H1 (cell line): ENCODE measurements at regions of chr18 and their contacts with region 1.

Region 1: DNA sequence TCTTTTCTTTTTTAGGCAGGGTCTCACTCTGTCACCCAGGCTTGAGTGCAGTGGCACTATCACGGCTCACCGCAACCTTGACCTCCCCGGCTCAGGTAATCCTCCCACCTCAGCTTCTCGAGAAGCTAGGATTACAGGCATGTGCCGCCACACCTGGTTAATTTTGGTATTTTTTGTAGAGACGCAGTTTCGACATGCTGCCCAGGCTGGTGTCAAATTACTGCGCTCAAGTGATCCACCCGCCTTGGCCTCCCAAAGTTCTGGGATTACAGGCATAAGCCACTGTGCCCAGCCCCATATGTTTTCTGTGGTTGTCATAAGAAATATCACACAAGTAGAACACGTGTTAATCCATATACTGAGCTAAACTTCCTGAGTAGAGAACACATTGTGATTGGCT is 14.6 kb downstream of the ENOSF1 start:
- DNase-seq: no peak
- H3K4me3 ChIP-seq: no peak overlapping the region
- H3K27ac ChIP-seq: no peak overlapping the region
- H3K4me1 ChIP-seq: no peaks in the 10 kb centered on the region; a peak in 1 of 7 replicates
- H3K27me3 ChIP-seq: no peaks in the 10 kb centered on the region
- CTCF ChIP-seq: no peak
- EP300 ChIP-seq: no peak
- POLR2A ChIP-seq: no peak
- RAD21 ChIP-seq: peak in 1 of 2 experiments; percentile 26; a peak in 1 of 4 replicates

Region 2: DNA sequence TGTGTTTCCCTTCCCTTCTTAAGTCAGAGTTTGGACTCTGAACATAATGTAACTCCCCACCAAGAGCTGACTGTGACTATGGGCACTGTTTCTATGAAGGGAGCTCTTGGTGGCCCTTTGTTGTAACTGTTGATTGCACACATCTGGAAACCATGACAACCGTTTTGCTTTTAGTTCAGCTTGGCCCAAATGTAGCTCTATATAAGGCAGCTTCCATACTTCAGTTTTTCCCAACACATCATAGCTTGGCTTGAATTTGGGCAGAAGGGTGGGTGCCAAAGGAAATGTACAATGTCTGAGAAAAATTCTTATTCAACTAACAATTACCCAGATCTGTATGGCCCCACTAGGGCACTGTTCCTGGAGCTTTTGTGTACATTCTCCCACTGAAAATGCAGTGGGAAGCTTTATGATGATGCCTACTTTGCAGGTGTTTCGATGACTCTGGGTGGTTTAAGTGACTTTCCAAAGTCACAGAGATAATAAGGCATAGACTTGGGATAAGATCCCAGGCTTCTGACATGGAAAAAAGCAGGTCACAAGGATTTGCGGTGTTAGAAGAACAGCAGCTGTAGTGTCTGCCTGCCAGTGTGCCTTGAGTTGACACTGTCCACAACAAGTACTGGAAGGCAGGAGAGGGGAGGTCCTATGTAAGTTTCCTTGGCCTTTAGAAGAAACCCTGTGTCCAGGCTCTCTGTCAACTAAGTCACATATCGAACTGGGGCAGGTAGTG is 120.0 kb before region 1 on chr18:
- CTCF ChIA-PET with region 1: no interaction called
- POLR2A ChIA-PET with region 1: no interaction called
- DNase-seq: no peak
- H3K4me3 ChIP-seq: no peak overlapping the region
- H3K27ac ChIP-seq: no peak overlapping the region
- H3K4me1 ChIP-seq: peaks cover 5 to 22% (median 20%) of the 10 kb centered on the region in 4 experiments; a peak in 5 of 7 replicates
- H3K27me3 ChIP-seq: no peaks in the 10 kb centered on the region
- CTCF ChIP-seq: no peak
- EP300 ChIP-seq: no peak
- POLR2A ChIP-seq: no peak
- RAD21 ChIP-seq: no peak

Region 3: GRCh38 chr18:686339-687111 is 11.3 kb before region 1 on chr18:
- CTCF ChIA-PET with region 1: interaction called, 10 read pairs
- POLR2A ChIA-PET with region 1: interaction called, 5 read pairs
- DNase-seq: peak; percentile 29 to 66
- H3K4me3 ChIP-seq: peak overlapping the region in 3 of 4 experiments; percentile 11 to 33 (median 21); a peak in 3 of 8 replicates
- H3K27ac ChIP-seq: no peak overlapping the region
- H3K4me1 ChIP-seq: peaks cover 7 to 19% (median 11%) of the 10 kb centered on the region in 4 experiments
- H3K27me3 ChIP-seq: peaks cover 0 to 4% (median 0%) of the 10 kb centered on the region in 4 experiments; a peak in 3 of 7 replicates
- CTCF ChIP-seq: peak; percentile 9 to 21 (median 14); a peak in 3 of 4 replicates
- EP300 ChIP-seq: no peak
- POLR2A ChIP-seq: no peak
- RAD21 ChIP-seq: peak in 1 of 2 experiments; percentile 34; a peak in 2 of 4 replicates

Region 4: GRCh38 chr18:712401-713134 is 14.8 kb after region 1 on chr18 and contains the start of gene ENOSF1:
- CTCF ChIA-PET with region 1: interaction called, 20 read pairs
- POLR2A ChIA-PET with region 1: interaction called, 6 read pairs
- DNase-seq: peak; percentile 79 to 99
- H3K4me3 ChIP-seq: peak within 1 kb of the TSS; percentile 64 to 86 (median 76)
- H3K27ac ChIP-seq: peak within 1 kb of the TSS; percentile 50; the same call in 1 of the 2 replicates
- H3K4me1 ChIP-seq: peaks cover 0 to 3% (median 1%) of the 10 kb centered on the region in 4 experiments; a peak in 2 of 7 replicates
- H3K27me3 ChIP-seq: no peaks in the 10 kb centered on the region
- CTCF ChIP-seq: peak; percentile 76 to 85 (median 84)
- EP300 ChIP-seq: no peak; a peak in 1 of 3 replicates
- POLR2A ChIP-seq: peak in 1 of 2 experiments; percentile 62; a peak in 1 of 3 replicates
- RAD21 ChIP-seq: peak; percentile 64 to 78
- total RNA-seq, gene ENOSF1: 25.6 and 26.4 TPM in 2 replicates

Region 5: DNA sequence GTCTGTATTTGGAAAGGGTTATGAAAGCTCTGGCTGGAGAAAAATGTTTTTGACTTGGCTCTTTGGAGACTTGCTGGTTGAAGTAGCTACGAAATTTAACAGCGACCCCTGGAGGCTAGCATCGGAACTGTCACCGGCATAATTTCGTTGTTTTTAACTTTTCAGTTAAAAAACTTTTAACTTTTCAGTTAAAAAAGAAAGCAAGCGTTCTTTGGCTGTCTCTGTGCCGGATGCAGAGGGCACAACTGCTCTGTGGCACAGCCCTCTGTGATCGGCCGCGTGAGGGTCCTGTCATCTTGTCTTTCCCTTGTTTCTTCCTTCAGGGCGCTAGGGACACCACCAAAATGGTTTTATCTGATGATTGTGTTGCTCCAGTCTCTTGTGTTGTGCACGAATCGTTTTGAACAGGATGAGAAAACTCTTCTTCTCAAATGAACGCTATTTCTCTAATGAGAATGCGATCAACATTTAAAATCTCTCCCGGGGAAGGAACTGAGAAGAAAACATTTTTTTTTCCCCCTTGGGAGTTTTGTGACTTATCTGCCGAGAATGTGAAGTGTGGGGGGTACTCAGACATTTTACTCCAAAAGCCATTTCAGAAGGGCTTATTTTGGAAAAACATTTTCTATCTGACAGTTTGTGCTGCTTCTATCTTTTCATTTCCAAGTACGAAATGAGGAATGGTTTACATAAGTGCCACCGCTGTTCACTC is 264.0 kb after region 1 on chr18:
- CTCF ChIA-PET with region 1: no interaction called
- POLR2A ChIA-PET with region 1: no interaction called
- DNase-seq: peak; percentile 33 to 85
- H3K4me3 ChIP-seq: peak overlapping the region in 2 of 4 experiments; percentile 23 to 47; a peak in 4 of 8 replicates
- H3K27ac ChIP-seq: no peak overlapping the region
- H3K4me1 ChIP-seq: peaks cover 0 to 2% (median under 1%) of the 10 kb centered on the region in 4 experiments; a peak in 2 of 7 replicates
- H3K27me3 ChIP-seq: no peaks in the 10 kb centered on the region
- CTCF ChIP-seq: peak; percentile 36 to 69 (median 64)
- EP300 ChIP-seq: no peak
- POLR2A ChIP-seq: no peak
- RAD21 ChIP-seq: peak; percentile 55 to 65